ENCODE measurements at regions of chr9 and their contacts with region 1.

Region 1: GRCh38 chr9:36721846-36722572 is 149.3 kb downstream of the MELK start:
- DNase-seq: peak; percentile 77
- H3K4me3 ChIP-seq: no peak overlapping the region
- H3K27ac ChIP-seq: peak overlapping the region in 2 of 4 donors; percentile 24 to 54
- H3K4me1 ChIP-seq: peaks cover 0 to 3% (median 0%) of the 10 kb centered on the region in 4 donors
- H3K27me3 ChIP-seq: no peaks in the 10 kb centered on the region
- CTCF ChIP-seq: no peak
- EP300 ChIP-seq: no peak
- POLR2A ChIP-seq: no peak

Region 2: DNA sequence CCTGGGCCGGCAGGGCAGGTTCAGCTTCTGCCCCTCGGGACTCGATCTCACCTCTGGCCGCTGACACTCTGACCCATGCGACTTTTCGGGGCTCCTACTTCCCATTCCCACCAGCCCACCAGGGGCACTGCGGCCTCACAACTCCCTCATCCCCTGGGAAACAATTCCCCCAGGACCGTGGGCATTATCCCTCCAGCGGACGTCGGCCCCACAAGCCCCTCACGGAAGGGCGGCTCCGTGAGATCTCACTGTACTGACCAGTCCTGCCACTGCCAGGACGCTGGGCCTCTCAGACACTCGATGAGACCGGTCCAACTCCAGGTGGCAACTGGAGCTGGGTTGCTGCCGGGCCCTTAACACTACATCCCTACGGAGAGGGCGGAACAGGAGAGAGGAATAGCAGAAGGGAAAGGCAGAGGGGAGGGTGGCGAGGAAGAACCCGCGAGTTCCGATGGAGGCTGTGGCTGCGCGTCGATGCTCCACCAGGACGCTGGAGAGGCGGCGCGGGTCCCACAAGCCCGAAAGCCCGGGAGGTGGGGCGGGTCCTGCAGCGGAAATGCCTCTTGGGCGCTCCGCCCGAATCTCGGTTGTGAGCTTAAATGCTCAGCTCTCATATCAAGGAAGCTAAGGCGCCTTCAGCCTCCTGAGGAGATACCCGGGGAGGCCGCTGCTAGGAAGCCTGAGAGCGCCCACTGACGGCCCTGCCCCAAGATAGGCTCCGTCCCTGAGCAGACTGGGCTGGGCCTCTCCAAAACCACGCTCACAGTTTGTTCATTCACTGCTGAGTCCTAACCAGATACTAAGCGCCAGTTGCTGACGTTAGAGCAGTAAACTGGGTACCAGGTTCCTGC is 1685.9 kb before region 1 on chr9:
- in situ Hi-C with region 1: no loop called
- intact Hi-C with region 1: no loop called
- DNase-seq: peak; percentile 21
- H3K4me3 ChIP-seq: peak overlapping the region in 2 of 4 donors; percentile 3 to 21
- H3K27ac ChIP-seq: peak overlapping the region in 1 of 4 donors; percentile 14
- H3K4me1 ChIP-seq: peaks cover 0 to 3% (median 1%) of the 10 kb centered on the region in 4 donors
- H3K27me3 ChIP-seq: no peaks in the 10 kb centered on the region
- CTCF ChIP-seq: no peak
- EP300 ChIP-seq: no peak
- POLR2A ChIP-seq: no peak

Region 3: DNA sequence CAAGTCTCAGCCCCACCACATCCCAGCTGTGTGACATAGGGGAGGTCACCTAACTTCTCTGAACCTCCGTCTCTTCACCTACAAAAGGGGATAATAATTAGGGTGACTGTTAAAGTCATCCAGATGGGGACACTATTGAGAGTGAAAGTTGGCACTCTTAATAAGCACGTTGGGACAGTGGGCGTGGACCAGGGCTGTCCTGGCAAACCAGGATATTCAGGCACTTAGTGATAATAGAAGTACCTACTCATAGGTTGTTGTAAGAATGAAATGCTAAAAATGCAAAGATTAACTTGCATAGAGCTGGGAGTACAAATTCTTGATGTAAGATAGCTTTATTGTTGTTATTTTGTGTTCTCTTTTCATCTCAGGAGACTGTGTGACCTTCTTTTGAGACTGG is 28.6 kb after region 1 on chr9:
- in situ Hi-C with region 1: no loop called
- intact Hi-C with region 1: loop called (anchors 1 kb)
- DNase-seq: no peak
- H3K4me3 ChIP-seq: no peak overlapping the region
- H3K27ac ChIP-seq: no peak overlapping the region
- H3K4me1 ChIP-seq: no peaks in the 10 kb centered on the region
- H3K27me3 ChIP-seq: peaks cover 24% of the 10 kb centered on the region
- CTCF ChIP-seq: no peak
- EP300 ChIP-seq: no peak
- POLR2A ChIP-seq: no peak

Region 4: GRCh38 chr9:36866840-36867239 is 144.8 kb after region 1 on chr9:
- in situ Hi-C with region 1: no loop called
- intact Hi-C with region 1: no loop called
- DNase-seq: no peak
- H3K4me3 ChIP-seq: no peak overlapping the region
- H3K27ac ChIP-seq: peak overlapping the region in 1 of 4 donors; percentile 64
- H3K4me1 ChIP-seq: peaks cover 0 to 23% (median 8%) of the 10 kb centered on the region in 4 donors
- H3K27me3 ChIP-seq: peaks cover under 1% of the 10 kb centered on the region
- CTCF ChIP-seq: no peak
- EP300 ChIP-seq: no peak
- POLR2A ChIP-seq: no peak

Measured in transverse colon (tissue), 4 donors.